ENCODE measurements at regions of chr10 and their contacts with region 1.

Region 1: GRCh38 chr10:23994479-23995046 is 214.4 kb upstream of the KIAA1217 start:
- DNase-seq: peak; percentile 7
- H3K4me3 ChIP-seq: no peak overlapping the region
- CTCF ChIP-seq: peak; percentile 86

Region 2: DNA sequence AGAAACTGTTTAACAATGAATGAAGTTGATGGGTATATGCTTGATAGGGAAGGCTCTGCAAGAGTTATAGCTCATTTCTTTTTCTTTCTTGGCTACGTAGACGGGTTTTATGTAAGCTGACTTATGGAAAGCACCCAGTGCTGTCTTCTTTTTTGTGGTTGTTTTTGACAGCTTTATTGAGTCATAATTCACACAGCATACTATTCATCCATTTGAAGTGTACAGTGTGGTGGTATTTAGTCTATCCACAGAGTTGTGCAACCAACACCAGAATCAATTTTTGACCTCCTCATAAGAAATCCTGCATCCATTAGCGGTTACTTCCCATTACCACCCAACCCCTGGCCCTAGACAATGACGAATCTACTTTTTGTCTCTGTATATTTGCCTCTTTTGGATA is 26.3 kb before region 1 on chr10:
- CTCF ChIA-PET with region 1: no interaction called
- POLR2A ChIA-PET with region 1: no interaction called
- DNase-seq: no peak
- H3K4me3 ChIP-seq: no peak overlapping the region
- CTCF ChIP-seq: no peak

Region 3: GRCh38 chr10:24008164-24009091 is 13.9 kb after region 1 on chr10:
- CTCF ChIA-PET with region 1: interaction called, 29 read pairs
- POLR2A ChIA-PET with region 1: no interaction called
- DNase-seq: peak; percentile 1
- H3K4me3 ChIP-seq: no peak overlapping the region
- CTCF ChIP-seq: no peak

Region 4: DNA sequence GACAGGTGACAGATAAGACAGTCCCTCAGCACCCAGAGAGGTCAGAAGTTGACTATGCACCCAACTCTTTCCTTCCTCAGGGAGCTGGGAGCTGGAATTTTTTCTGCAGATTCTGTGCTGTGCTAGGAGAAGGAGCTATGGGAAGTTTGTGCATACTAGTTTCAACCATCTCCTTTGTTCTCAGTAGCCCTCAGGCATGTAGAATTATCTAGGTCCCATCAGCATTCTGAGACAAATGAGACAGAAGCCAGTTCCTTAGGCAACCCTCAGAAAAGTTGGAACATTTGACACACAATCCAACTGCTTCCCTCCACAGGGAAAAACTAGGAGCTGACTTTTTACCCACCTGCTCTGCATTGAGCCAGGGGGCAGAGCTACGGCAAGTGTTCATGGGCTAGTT is 74.2 kb after region 1 on chr10:
- CTCF ChIA-PET with region 1: no interaction called
- POLR2A ChIA-PET with region 1: no interaction called
- DNase-seq: no peak
- H3K4me3 ChIP-seq: no peak overlapping the region
- CTCF ChIP-seq: no peak

Region 5: GRCh38 chr10:24360282-24361127 is 365.9 kb after region 1 on chr10:
- CTCF ChIA-PET with region 1: interaction called, 147 read pairs
- POLR2A ChIA-PET with region 1: no interaction called
- DNase-seq: no peak
- H3K4me3 ChIP-seq: no peak overlapping the region
- CTCF ChIP-seq: peak; percentile 81

Region 6: GRCh38 chr10:24383681-24384106 is 389.1 kb after region 1 on chr10:
- CTCF ChIA-PET with region 1: interaction called, 25 read pairs
- POLR2A ChIA-PET with region 1: no interaction called
- DNase-seq: peak; percentile 95
- H3K4me3 ChIP-seq: no peak overlapping the region
- CTCF ChIP-seq: peak; percentile 66

Region 7: GRCh38 chr10:24518981-24519597 is 524.5 kb after region 1 on chr10:
- CTCF ChIA-PET with region 1: interaction called, 153 read pairs
- POLR2A ChIA-PET with region 1: no interaction called
- DNase-seq: no peak
- H3K4me3 ChIP-seq: no peak overlapping the region
- CTCF ChIP-seq: peak; percentile 70

Region 8: DNA sequence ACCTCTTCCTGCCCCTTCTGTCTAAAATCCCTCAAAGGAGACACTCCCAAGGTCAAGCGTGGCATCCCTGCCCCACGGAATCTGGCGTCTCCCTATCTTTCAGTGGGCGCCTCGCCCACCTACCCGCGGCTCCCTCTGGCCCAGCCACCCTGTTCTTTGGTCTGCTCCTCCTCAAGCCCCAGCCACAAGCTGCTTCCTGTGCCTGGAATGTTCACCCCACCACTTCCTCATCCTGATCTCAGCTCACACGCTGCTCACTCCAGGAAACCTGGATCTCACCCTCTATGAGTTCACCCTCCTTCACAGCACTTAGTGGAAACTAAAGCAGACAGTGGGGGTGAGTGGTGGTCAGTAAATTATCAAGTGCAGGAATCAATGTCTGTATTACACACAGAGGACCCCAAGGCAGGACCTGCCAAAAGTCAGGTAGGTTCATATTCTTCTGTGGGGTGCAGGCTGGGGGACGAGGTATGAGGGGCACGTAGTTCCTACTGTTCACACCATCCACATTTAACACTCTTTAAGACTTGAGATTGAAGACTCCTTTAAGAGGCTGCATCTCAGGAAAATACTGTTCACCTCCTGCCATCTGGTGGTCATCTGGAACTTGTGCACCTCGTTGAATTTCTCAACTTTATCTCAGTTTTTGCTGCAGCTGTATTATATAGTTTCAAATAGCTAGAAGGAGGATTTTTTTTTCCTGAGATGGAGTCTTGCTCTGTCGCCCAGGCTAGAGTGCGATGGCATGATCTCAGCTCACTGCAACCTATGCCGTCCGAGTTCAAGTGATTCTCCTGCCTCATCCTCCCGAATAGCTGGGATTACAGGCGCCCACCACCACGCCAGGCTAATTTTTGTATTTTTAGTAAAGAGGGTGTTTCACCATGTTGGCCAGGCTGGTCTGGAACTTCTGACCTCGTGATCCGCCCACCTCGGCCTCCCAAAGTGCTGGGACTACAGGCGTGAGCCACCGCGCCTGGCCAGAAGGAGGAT is 562.5 kb after region 1 on chr10:
- CTCF ChIA-PET with region 1: interaction called, 46 read pairs
- POLR2A ChIA-PET with region 1: no interaction called
- DNase-seq: peak; percentile 59
- H3K4me3 ChIP-seq: no peak overlapping the region
- CTCF ChIP-seq: peak; percentile 70